ENCODE measurements at regions of chr3 and their contacts with region 1.

Region 1: DNA sequence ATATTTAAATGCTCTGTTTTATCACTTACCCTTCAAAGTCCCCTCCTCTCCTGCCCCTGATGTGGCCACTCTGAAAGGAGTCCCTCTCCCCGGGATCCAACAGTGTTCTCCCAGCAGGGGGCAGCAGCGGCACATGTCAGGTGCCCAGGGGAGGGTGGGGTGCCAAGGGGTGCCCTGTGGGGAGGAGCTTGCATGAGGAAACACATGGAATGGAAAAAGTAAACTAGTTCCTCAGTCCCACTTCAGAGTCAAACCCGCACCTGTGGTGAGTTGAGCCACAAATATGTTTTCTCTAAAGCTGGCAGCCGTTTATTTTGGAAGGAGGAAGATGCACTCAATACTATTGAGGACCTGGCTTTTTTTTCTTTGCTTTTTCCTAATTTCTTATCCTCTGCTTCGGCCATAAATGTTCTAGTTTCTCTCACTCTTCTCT is 30.1 kb upstream of the NRROS start:
- DNase-seq: peak; percentile 96
- H3K4me3 Mint-ChIP-seq: peak overlapping the region; percentile 35
- H3K27ac Mint-ChIP-seq: peak overlapping the region; percentile 21
- H3K4me1 Mint-ChIP-seq: peaks cover 33% of the 10 kb centered on the region
- H3K27me3 Mint-ChIP-seq: no peaks in the 10 kb centered on the region

Region 2: DNA sequence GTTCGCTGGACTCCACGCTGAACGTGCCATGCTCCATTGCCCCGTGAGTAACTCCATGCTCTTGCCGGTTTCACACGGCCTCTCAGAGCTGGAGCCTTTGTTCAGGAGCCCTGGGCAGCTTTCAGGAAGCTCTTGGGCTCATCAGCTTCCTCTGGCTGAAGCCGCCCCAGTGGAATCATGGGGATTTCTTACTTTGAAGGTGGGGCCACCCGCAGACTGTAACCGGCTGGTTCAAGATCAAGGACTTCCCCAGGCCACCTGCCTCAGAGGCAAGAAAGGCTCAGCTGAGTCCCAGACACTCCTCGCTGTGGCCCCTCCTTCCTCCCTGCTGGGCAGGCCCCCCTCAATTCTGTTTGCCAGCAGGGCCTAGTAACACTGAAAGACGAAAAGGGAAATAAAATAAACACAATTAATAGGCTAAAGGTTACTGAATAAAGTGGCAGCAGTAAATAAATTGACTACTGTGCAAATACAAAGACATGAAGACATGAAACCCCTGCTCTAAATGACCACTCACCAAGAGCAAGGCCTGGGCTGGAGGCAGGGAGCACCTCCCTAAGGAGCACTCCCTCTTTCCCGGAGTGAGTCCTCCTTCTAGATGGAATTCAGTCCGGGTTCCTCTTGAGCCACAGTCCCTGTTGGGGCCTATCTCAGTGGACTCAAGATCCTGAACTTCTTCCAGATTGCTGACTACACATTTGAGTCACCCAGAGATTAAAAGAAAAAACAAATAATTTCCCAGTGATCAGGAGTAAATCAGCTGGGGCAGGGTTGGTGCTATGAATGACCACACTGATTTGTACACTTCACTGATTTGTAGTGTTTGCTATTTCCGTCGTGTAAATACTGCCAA is 449.2 kb before region 1 on chr3:
- CTCF ChIA-PET with region 1: no interaction called
- intact Hi-C with region 1: no loop called
- DNase-seq: peak; percentile 79
- H3K4me3 Mint-ChIP-seq: no peak overlapping the region
- H3K27ac Mint-ChIP-seq: no peak overlapping the region
- H3K4me1 Mint-ChIP-seq: peaks cover 11% of the 10 kb centered on the region
- H3K27me3 Mint-ChIP-seq: no peaks in the 10 kb centered on the region

Region 3: GRCh38 chr3:196537319-196537984 is 71.9 kb before region 1 on chr3:
- CTCF ChIA-PET with region 1: interaction called, 4 read pairs
- intact Hi-C with region 1: loop called (anchors 2 kb)
- DNase-seq: peak; percentile 83
- H3K4me3 Mint-ChIP-seq: no peak overlapping the region
- H3K27ac Mint-ChIP-seq: no peak overlapping the region
- H3K4me1 Mint-ChIP-seq: no peaks in the 10 kb centered on the region
- H3K27me3 Mint-ChIP-seq: peaks cover 2% of the 10 kb centered on the region

Region 4: GRCh38 chr3:196639483-196640296 is 30.3 kb after region 1 on chr3 and contains the start of gene NRROS:
- CTCF ChIA-PET with region 1: interaction called, 15 read pairs
- intact Hi-C with region 1: no loop called
- DNase-seq: peak; percentile 77
- H3K4me3 Mint-ChIP-seq: peak within 1 kb of the TSS; percentile 80
- H3K27ac Mint-ChIP-seq: peak within 1 kb of the TSS; percentile 82
- H3K4me1 Mint-ChIP-seq: peaks cover 45% of the 10 kb centered on the region
- H3K27me3 Mint-ChIP-seq: no peaks in the 10 kb centered on the region
- total RNA-seq, gene NRROS: 8.1 to 9.2 TPM

Region 5: DNA sequence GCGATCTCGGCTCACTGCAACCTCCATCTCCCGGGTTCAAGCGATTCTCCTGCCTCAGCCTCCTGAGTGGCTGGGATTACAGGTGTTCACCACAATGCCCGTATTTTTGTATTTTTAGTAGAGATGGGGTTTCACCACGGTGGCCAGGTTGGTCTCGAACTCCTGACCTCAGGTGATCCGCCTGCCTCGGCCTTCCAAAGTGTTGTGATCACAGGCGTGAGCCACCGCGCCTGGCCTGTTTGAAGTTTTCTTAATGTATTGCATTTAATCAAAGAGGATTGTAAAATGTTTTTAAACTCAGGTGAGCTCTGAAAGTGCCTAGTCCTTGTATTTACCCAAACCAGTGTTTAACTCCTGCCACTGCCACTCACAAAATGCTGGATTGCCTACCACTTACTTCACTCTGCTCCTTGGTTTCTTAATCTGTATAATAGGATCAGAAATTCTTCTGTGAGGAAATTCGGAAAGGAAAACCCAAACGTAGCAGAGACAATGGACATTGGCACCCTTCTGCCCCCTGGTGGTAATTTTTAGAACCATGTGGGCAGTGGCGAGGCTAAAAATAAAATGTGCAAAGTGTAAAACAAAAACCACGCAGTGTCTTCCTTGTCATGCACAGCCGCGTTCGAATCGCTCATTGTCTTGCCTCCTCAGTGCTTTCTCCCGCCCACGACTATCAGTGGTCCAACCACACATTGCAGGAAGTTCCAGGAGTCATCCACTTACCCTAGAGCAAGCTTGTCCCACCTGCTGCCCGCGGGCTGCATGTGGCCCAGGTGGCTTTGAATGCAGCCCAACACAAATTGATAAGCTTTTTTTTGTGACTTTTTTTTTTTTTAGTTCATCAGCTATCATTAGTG is 75.4 kb after region 1 on chr3:
- CTCF ChIA-PET with region 1: interaction called, 265 read pairs
- intact Hi-C with region 1: loop called (anchors 1 kb)
- DNase-seq: peak; percentile 74
- H3K4me3 Mint-ChIP-seq: peak overlapping the region; percentile 45
- H3K27ac Mint-ChIP-seq: no peak overlapping the region
- H3K4me1 Mint-ChIP-seq: peaks cover 12% of the 10 kb centered on the region
- H3K27me3 Mint-ChIP-seq: no peaks in the 10 kb centered on the region

Region 6: GRCh38 chr3:196796317-196796716 is 187.0 kb after region 1 on chr3:
- CTCF ChIA-PET with region 1: no interaction called
- intact Hi-C with region 1: no loop called
- DNase-seq: no peak
- H3K4me3 Mint-ChIP-seq: no peak overlapping the region
- H3K27ac Mint-ChIP-seq: no peak overlapping the region
- H3K4me1 Mint-ChIP-seq: peaks cover 9% of the 10 kb centered on the region
- H3K27me3 Mint-ChIP-seq: no peaks in the 10 kb centered on the region

Region 7: GRCh38 chr3:196837819-196838420 is 228.6 kb after region 1 on chr3:
- CTCF ChIA-PET with region 1: no interaction called
- intact Hi-C with region 1: loop called (anchors 10 kb)
- DNase-seq: peak; percentile 90
- H3K4me3 Mint-ChIP-seq: no peak overlapping the region
- H3K27ac Mint-ChIP-seq: no peak overlapping the region
- H3K4me1 Mint-ChIP-seq: no peaks in the 10 kb centered on the region
- H3K27me3 Mint-ChIP-seq: no peaks in the 10 kb centered on the region